Activated CD8-positive, alpha-beta T cell treated with anti-CD3 and anti-CD28 coated beads, Interleukin-2, amount 10 ng/mL, durations not matched to agents 7 days and 5 days (primary cell): ENCODE measurements at regions of chr4 and their contacts with region 1.

Region 1: GRCh38 chr4:40205259-40206198 is 8.7 kb downstream of the RHOH start:
- DNase-seq: peak; percentile 73
- ATAC-seq: peak; percentile 50
- H3K4me3 Mint-ChIP-seq: peak overlapping the region; percentile 93
- H3K27ac Mint-ChIP-seq: peak overlapping the region; percentile 96
- H3K4me1 Mint-ChIP-seq: peaks cover 55% of the 10 kb centered on the region
- H3K27me3 Mint-ChIP-seq: no peaks in the 10 kb centered on the region

Region 2: DNA sequence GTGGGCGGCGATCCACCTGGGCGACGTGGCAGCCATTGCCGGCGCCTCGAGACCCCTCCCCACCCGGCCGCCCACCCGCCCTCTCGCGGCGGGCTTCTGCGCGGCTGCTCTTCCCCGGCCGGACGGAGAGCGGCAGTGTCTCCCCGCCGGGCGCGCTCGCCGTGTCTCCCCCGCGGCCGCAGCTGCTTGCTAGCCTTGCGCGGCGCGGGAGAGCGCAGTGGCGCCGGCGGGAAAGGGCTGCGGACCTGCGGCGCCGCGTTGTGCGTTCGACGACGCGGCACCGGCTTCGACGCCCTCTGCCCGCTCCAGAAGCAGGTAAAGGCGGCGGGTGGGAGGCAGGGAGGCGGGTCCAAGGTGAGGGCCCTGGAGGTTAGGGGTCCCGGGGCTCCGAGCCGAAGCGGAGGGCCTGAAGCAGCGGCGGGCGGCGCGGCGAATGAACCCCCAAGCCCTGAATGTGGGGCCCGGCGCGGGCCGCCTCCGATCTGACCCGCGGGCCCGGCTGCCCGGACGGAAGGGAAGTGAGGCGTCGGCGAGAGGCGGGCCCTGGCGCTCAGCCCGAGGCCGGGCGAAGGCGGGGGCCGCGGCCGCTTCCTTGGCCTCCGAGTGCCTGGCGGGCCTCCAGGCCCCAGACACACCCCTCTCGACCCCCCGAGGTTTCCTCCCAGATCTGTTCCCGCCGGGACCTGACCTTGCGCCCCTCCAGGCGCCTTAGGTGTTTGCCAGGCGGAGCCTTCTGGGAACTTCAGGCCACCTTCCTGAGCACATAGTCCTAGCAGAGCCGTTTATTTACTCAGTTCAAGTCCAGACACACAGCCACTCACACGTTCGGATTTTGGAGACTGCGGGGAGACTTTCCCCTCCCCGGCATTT is 148.6 kb before region 1 on chr4 and contains the start of gene N4BP2:
- CTCF ChIA-PET with region 1: interaction called, 11 read pairs
- POLR2A ChIA-PET with region 1: interaction called, 52 read pairs
- DNase-seq: peak; percentile 80
- ATAC-seq: peak; percentile 49
- H3K4me3 Mint-ChIP-seq: peak within 1 kb of the TSS; percentile 93
- H3K27ac Mint-ChIP-seq: peak within 1 kb of the TSS; percentile 96
- H3K4me1 Mint-ChIP-seq: peaks cover 37% of the 10 kb centered on the region
- H3K27me3 Mint-ChIP-seq: peaks cover 8% of the 10 kb centered on the region
- total RNA-seq, gene N4BP2: 25.1 to 29.0 TPM

Region 3: DNA sequence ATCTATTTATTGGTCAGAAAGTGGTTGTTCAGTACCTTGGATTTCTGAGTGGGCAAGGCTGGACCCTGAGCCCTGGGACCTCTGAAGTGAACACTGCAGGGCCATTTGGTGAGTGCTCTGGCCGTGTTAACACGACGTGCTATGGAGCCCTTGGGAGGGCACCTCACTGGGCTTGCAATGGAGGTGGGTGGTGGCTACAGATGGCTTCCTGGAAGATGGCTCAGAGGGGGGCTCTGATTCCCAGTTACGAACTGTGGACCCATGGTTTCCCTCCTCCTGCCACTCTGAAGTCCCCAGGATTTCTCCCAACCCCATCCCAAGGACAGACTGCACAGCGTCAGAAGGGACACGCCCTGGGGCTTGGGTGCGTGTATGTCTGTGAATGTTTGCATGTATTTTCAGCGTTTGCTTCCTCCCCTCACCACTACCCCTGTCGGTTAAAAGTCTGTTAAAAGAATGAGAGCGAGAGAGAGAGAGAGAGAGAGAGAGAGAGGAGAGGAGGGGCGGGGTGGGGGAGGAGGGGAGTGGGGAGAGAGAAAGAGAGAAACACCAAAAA is 12.4 kb before region 1 on chr4:
- CTCF ChIA-PET with region 1: interaction called, 14 read pairs
- POLR2A ChIA-PET with region 1: interaction called, 517 read pairs
- DNase-seq: peak; percentile 71
- ATAC-seq: peak; percentile 31
- H3K4me3 Mint-ChIP-seq: peak overlapping the region; percentile 93
- H3K27ac Mint-ChIP-seq: peak overlapping the region; percentile 96
- H3K4me1 Mint-ChIP-seq: peaks cover 67% of the 10 kb centered on the region
- H3K27me3 Mint-ChIP-seq: no peaks in the 10 kb centered on the region

Region 4: DNA sequence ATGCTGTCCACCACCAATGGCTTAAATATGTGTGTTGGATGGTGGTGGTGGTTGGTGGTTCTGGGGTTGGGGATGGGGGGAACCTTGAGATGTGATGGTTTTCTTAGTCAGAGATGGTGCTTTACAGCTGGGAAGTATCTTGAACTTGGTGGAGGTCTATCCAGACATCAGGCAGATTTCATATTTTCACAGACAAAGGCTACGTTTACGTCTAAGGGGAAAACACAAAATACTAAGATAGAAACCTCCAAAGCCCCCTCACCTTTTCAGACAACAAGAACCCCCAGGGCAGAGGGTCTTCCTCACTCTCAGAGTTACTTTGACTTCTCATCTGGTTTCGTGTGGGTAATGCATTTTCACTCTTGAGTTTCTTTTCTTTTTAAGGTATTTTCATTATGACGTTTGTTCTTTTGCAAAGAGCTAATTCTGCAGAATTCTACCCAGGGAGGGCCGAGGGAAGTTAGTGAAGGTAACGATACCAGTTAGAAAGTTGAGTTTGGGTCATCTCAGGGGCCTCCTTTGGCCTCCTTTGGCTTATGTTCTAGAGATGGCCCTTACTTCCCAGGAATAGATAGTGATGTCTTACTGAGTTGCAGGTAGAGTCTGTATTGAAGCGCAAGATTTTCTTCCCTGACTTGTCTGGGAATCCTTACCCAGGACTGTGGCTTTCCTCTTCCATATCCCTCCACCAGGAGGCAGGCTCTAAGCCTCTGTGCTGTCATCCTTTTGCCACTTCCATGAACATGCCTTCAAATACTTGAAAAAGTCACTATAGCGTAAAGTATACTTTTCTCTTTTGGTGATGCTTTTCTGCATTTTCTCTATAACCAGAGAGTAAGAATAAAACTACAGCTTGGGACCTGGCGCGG is 23.2 kb after region 1 on chr4:
- CTCF ChIA-PET with region 1: interaction called, 36 read pairs
- POLR2A ChIA-PET with region 1: interaction called, 280 read pairs
- DNase-seq: peak; percentile 56
- ATAC-seq: no peak
- H3K4me3 Mint-ChIP-seq: peak overlapping the region; percentile 64
- H3K27ac Mint-ChIP-seq: peak overlapping the region; percentile 84
- H3K4me1 Mint-ChIP-seq: peaks cover 95% of the 10 kb centered on the region
- H3K27me3 Mint-ChIP-seq: no peaks in the 10 kb centered on the region

Region 5: DNA sequence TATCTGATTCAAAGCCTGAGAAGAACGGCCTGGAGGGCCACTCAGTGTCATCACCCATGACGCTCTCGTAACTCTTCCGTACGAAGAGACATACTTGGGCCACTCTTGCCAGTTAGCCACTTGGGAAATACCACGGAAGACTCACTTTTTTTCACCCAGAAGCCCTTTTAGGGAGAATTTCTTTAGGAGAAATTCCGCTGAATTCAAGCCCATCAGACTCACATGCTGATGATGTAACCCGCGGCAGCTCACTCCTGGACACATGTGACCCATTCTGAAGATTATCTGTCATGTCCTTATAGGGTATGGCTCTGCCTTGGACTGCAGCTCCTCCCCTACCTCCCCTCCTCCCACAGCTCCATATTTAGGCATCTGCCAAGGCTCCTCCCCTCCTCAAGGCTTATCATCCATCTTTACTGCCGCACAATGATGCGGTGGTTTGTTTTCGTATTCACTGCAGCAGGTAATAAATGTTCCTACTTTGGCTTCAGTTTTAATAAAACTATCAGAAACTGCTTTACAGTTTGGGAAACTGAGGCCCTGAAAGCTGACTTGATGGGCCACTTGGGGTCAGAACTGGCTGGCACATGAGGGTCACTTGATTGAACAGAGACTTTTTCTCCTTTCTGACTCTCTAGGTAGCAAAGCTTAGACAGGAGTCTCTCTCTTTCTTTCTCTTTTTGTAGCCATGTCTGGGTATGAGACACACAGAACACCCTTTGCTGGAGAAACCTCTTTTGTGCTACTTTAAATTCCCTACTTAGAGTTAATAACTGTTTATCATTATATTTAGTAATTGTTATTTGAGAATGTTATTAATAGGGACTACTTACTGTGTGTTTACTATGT is 33.4 kb after region 1 on chr4:
- CTCF ChIA-PET with region 1: interaction called, 7 read pairs
- POLR2A ChIA-PET with region 1: interaction called, 20 read pairs
- DNase-seq: peak; percentile 92
- ATAC-seq: peak; percentile 91
- H3K4me3 Mint-ChIP-seq: peak overlapping the region; percentile 71
- H3K27ac Mint-ChIP-seq: peak overlapping the region; percentile 96
- H3K4me1 Mint-ChIP-seq: peaks cover 89% of the 10 kb centered on the region
- H3K27me3 Mint-ChIP-seq: no peaks in the 10 kb centered on the region